ENCODE measurements at regions of chr12 and their contacts with region 1.

Region 1: DNA sequence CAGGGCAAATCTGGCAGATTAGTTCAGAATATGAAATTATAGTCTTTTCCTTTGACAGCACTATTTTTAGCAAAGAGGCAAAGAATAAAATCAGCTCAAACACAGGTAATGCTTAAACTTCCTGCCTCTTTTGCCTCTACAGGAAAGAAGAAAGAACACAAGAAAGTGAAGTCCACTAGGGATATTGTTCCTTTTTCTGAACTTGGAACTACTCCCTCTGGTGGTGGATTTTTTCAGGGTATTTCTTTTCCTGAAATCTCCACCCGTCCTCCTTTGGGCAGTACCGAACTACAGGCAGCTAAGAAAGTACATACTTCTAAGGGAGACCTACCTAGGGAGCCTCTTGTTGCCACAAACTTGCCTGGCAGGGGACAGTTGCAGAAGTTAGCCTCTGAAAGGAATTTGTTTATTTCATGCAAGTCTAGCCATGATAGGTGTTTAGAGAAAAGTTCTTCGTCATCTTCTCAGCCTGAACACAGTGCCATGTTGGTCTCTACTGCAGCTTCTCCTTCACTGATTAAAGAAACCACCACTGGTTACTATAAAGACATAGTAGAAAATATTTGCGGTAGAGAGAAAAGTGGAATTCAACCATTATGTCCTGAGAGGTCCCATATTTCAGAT is 17.4 kb downstream of the TMPO start:
- DNase-seq: peak; percentile 23
- H3K4me3 ChIP-seq: no peak overlapping the region
- H3K27ac ChIP-seq: no peak overlapping the region
- H3K27me3 ChIP-seq: no peaks in the 10 kb centered on the region
- CTCF ChIP-seq: peak; percentile 68

Region 2: GRCh38 chr12:98424726-98425401 is 107.9 kb before region 1 on chr12:
- CTCF ChIA-PET with region 1: interaction called, 62 read pairs
- POLR2A ChIA-PET with region 1: no interaction called
- DNase-seq: peak; percentile 43
- H3K4me3 ChIP-seq: no peak overlapping the region
- H3K27ac ChIP-seq: no peak overlapping the region
- H3K27me3 ChIP-seq: no peaks in the 10 kb centered on the region
- CTCF ChIP-seq: peak; percentile 73

Region 3: GRCh38 chr12:98544751-98545150 is 12.0 kb after region 1 on chr12:
- CTCF ChIA-PET with region 1: interaction called, 41 read pairs
- POLR2A ChIA-PET with region 1: no interaction called
- DNase-seq: no peak
- H3K4me3 ChIP-seq: no peak overlapping the region
- H3K27ac ChIP-seq: no peak overlapping the region
- H3K27me3 ChIP-seq: no peaks in the 10 kb centered on the region
- CTCF ChIP-seq: no peak

Region 4: DNA sequence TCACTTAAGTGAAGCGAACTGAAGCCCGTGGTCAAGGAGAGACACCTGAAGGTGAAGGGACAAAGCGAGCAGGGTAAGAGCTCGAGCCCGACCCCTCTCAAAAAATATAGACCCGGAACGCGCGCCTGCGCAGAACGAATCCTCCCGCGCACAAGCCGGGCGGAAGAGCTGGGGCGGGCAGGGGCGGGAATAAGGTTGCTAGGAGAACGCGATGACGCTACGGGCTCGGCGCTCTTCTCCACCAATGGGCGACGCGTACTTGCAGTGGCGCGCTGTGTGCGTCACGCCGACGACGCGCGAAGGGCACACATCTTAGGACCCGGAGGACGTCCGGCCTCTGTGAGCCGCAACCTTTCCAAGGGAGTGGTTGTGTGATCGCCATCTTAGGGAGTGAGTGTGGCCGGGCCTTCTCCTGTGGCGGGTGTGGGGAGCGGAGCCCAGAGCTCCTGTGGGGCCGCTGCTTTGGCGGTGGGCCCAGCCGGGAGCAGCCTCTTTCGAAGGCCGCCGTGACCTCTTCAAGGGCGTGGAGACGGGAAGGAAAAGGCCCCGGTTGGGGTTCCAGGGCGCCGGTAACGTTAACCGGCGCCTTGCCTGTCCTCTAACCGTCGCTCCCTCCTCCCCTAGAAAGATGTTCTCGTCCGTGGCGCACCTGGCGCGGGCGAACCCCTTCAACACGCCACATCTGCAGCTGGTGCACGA is 60.7 kb after region 1 on chr12 and contains the start of gene SLC25A3:
- CTCF ChIA-PET with region 1: interaction called, 13 read pairs
- POLR2A ChIA-PET with region 1: interaction called, 4 read pairs
- DNase-seq: peak; percentile 98
- H3K4me3 ChIP-seq: peak within 1 kb of the TSS; percentile 99
- H3K27ac ChIP-seq: peak within 1 kb of the TSS; percentile 92
- H3K27me3 ChIP-seq: no peaks in the 10 kb centered on the region
- CTCF ChIP-seq: no peak
- polyA plus RNA-seq, gene SLC25A3: 974 and 1,138 TPM in 2 replicates

Region 5: GRCh38 chr12:98771811-98772752 is 239.3 kb after region 1 on chr12:
- CTCF ChIA-PET with region 1: no interaction called
- POLR2A ChIA-PET with region 1: no interaction called
- DNase-seq: no peak
- H3K4me3 ChIP-seq: no peak overlapping the region
- H3K27ac ChIP-seq: no peak overlapping the region
- H3K27me3 ChIP-seq: peaks cover 8% of the 10 kb centered on the region
- CTCF ChIP-seq: no peak